ENCODE measurements at regions of chr2 and their contacts with region 1.

Region 1: DNA sequence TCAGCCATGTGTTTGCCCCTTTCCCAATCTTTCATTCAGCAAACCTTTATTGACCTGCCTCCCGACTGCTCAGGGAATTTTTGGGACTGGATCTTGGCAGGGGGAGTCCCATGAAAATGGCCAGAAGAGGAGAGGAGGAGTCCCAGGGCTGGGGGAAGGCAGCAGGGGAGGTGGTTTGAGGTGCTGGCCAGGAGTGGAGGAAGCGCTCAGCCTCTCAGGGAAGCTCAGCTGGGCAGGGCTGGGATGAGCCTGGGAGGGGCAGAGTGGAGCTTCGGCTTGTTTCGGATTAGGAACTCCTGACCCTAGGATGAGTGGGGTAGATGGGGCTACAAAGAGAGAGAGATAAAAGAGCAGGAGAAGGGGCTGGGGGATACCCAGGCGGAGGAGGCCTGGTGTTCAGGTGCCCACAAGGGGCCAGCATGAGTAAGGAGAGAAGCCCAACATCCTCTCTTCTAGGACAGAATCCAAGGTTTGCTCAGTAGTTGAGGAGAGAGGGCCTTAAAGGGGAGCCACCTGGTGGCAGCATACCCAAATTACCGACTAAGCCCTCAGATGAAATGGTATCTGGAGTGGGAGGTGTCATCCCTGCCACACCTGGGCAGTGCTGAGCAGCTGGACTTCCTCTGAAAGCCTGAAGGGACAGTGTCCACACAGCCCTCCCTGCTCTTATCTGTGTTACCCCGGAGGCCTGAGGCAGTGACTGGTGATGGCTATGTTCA is 91.1 kb downstream of the INHBB start:
- DNase-seq: peak; percentile 92
- ATAC-seq: peak; percentile 72
- H3K4me3 ChIP-seq: no peak overlapping the region
- H3K27ac ChIP-seq: peak overlapping the region; percentile 9; the same call in 1 of the 2 replicates
- H3K4me1 ChIP-seq: peaks cover 26% of the 10 kb centered on the region
- H3K27me3 ChIP-seq: no peaks in the 10 kb centered on the region
- CTCF ChIP-seq: peak; percentile 88

Region 2: GRCh38 chr2:120396013-120396885 is 40.8 kb before region 1 on chr2:
- CTCF ChIA-PET with region 1: no interaction called
- POLR2A ChIA-PET with region 1: no interaction called
- intact Hi-C with region 1: loop called (anchors 1 kb)
- DNase-seq: peak; percentile 39
- ATAC-seq: no peak
- H3K4me3 ChIP-seq: 0 out of 2 replicates have a peak overlapping the region, but pooled peaks have one; percentile 3
- H3K27ac ChIP-seq: peak overlapping the region; percentile 93
- H3K4me1 ChIP-seq: peaks cover 52% of the 10 kb centered on the region
- H3K27me3 ChIP-seq: no peaks in the 10 kb centered on the region
- CTCF ChIP-seq: no peak

Region 3: GRCh38 chr2:120470041-120470965 is 33.3 kb after region 1 on chr2:
- CTCF ChIA-PET with region 1: no interaction called
- POLR2A ChIA-PET with region 1: no interaction called
- intact Hi-C with region 1: loop called (anchors 2 kb)
- DNase-seq: peak; percentile 97
- ATAC-seq: peak; percentile 80
- H3K4me3 ChIP-seq: no peak overlapping the region
- H3K27ac ChIP-seq: peak overlapping the region; percentile 83
- H3K4me1 ChIP-seq: peaks cover 55% of the 10 kb centered on the region
- H3K27me3 ChIP-seq: no peaks in the 10 kb centered on the region
- CTCF ChIP-seq: no peak

Region 4: DNA sequence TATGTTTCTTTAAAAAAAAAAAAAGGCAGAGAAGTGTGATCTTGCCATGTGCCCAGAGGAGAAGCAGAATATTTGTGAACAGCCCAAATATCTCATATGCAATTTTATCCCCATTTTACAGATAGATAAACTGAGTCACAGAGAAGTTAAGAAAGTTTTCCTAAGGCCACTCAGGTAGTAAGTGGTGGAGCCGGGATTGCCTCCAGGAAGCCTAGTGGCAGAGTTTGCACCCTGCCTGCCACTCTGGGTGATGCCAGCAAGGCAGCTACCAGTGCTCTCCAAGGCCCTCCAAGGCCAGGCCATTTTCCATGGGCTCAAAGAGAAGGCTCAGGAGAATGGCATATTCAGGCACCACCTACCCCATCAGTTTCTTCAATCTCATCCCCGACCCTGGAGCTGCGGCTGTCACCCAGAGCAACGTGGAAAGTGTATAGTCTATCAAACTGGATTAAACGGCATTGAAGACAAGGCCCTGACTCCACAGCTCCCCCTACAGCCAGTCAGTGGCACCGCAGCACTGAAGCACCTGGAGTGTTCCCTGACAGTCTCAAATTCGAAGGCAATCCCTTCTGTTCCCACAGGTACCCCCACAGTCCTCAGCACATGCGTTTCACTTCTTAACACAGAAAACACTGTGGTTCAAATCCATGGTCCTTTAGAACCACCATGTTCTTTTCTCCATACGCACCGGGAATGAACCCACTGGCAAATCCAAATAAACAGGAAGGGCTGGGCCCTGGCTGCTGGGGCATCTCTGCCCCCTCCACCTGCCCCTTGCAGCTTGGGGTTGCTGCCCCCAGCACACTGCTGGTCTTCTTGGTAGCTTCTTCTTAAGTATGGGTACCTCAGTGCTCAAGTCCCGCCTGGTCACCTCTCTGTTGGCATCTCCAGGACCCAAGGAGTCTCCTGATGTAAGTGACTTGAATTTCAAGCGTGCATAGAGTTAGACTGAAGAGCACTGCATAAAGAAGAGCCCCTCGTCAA is 84.2 kb after region 1 on chr2:
- CTCF ChIA-PET with region 1: no interaction called
- POLR2A ChIA-PET with region 1: no interaction called
- intact Hi-C with region 1: loop called (anchors 2 kb)
- DNase-seq: peak; percentile 79
- ATAC-seq: peak; percentile 84
- H3K4me3 ChIP-seq: no peak overlapping the region
- H3K27ac ChIP-seq: no peak overlapping the region
- H3K4me1 ChIP-seq: peaks cover 11% of the 10 kb centered on the region
- H3K27me3 ChIP-seq: no peaks in the 10 kb centered on the region
- CTCF ChIP-seq: peak; percentile 92

Region 5: DNA sequence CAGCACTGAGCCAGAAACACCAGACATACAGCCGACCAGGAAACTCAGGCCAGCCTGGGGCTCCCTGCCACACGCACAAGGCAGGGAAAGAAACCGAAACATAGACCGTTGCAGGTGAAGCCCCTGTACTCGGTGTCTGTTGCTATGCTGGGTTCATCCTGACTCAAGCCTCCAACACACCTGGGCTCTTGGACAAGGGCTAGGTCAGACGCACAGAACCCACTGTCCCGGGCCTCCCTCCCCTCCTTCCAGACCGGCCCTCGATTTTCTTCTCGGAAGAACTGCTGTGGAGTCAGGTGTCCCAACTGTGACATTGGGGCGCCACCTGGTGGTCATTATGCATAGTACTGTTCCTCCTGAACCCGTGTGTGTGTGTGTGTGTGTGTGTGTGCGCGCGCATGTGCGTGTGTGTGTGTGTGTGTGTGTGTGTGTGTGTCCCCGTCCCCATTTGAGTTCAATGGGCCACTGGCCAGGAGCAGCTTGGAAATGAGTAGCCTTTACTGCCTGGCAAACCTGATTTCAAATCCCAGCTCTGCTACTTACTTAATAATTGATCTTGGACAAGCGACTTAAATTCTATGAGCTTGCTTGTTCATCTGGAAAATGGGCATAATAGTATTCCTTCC is 243.2 kb after region 1 on chr2:
- CTCF ChIA-PET with region 1: no interaction called
- POLR2A ChIA-PET with region 1: no interaction called
- intact Hi-C with region 1: loop called (anchors 2 kb)
- DNase-seq: peak; percentile 87
- ATAC-seq: peak; percentile 77
- H3K4me3 ChIP-seq: 0 out of 2 replicates have a peak overlapping the region, but pooled peaks have one; percentile 22
- H3K27ac ChIP-seq: no peak overlapping the region
- H3K4me1 ChIP-seq: peaks cover 14% of the 10 kb centered on the region
- H3K27me3 ChIP-seq: no peaks in the 10 kb centered on the region
- CTCF ChIP-seq: peak; percentile 60